CD4-positive, alpha-beta T cell (primary cell): ENCODE measurements at regions of chr13 and their contacts with region 1.

Region 1: DNA sequence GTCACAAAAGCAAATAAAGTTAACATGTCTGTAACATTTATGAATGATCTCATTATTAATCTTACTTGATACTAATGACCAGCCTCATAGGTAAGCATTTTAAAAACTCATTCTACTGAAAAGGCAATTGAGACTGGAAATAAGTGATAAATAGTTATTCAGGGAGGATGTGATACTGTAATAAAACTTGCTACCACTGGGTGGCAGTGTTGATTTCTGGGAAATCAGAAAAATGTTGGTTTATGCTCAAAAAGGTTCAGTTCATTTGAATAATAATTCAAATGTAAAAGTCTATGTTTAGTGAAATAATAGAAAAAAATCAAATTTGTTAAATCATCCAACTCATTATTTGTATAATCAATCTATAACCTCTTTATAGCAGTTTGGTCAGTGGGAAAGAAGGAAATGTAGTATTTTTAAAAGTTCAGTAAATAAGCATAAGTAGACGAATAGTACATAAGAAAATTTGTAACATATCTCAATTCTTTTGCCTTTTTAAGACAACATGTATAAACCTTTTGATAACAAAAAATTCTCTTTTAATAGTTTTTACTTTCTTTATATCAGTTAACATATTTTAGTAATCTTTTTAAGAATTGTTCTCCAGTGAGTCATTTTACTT is 9.6 kb downstream of the ABHD13 start:
- DNase-seq: peak in 7 of 14 experiments; percentile 2 to 75 (median 56)
- ATAC-seq: peak; percentile 54
- H3K4me3 ChIP-seq: no peak overlapping the region
- H3K4me3 Mint-ChIP-seq: no peak overlapping the region
- H3K27ac ChIP-seq: no peak overlapping the region
- H3K27ac Mint-ChIP-seq: no peak overlapping the region
- H3K4me1 ChIP-seq: peaks cover 7% of the 10 kb centered on the region
- H3K4me1 Mint-ChIP-seq: peaks cover 72% of the 10 kb centered on the region
- H3K27me3 ChIP-seq: no peaks in the 10 kb centered on the region
- H3K27me3 Mint-ChIP-seq: no peaks in the 10 kb centered on the region
- CTCF ChIP-seq: peak; percentile 95

Region 2: DNA sequence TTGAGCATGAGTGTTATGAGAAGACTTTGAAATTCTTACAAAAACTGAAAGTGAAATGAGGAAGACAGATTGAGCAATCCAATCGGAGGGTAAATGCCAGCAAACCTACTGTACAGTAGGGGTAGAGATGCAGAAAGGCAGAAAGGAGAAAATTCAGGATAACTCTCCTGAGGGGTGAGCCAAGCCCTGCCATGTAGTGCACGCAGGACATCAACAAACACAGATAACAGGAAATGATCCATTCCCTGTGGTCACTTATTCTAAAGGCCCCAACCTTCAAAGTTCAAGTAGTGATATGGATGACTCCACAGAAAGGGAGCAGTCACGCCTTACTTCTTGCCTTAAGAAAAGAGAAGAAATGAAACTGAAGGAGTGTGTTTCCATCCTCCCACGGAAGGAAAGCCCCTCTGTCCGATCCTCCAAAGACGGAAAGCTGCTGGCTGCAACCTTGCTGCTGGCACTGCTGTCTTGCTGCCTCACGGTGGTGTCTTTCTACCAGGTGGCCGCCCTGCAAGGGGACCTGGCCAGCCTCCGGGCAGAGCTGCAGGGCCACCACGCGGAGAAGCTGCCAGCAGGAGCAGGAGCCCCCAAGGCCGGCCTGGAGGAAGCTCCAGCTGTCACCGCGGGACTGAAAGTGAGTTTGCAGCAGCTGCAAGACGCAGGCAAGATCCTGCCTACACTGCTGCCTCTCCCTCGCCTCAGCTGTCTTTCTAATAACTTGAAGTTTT is 42.0 kb after region 1 on chr13 and contains the start of gene TNFSF13B:
- CTCF ChIA-PET with region 1: interaction called, 3 read pairs
- POLR2A ChIA-PET with region 1: interaction called, 5 read pairs
- intact Hi-C with region 1: loop called (anchors 10 kb)
- DNase-seq: peak in 12 of 14 experiments; percentile 12 to 67 (median 35)
- ATAC-seq: peak; percentile 61
- H3K4me3 ChIP-seq: peak within 1 kb of the TSS; percentile 64
- H3K4me3 Mint-ChIP-seq: peak within 1 kb of the TSS; percentile 87
- H3K27ac ChIP-seq: peak within 1 kb of the TSS; percentile 29 to 71
- H3K27ac Mint-ChIP-seq: peak within 1 kb of the TSS; percentile 87
- H3K4me1 ChIP-seq: peaks cover 12% of the 10 kb centered on the region
- H3K4me1 Mint-ChIP-seq: peaks cover 59% of the 10 kb centered on the region
- H3K27me3 ChIP-seq: no peaks in the 10 kb centered on the region
- H3K27me3 Mint-ChIP-seq: no peaks in the 10 kb centered on the region
- CTCF ChIP-seq: no peak
- total RNA-seq, gene TNFSF13B: 1.6 to 1.8 TPM

Region 3: GRCh38 chr13:108322206-108322824 is 94.6 kb after region 1 on chr13:
- CTCF ChIA-PET with region 1: no interaction called
- POLR2A ChIA-PET with region 1: no interaction called
- intact Hi-C with region 1: loop called (anchors 5 kb)
- DNase-seq: peak in 3 of 14 experiments; percentile 65 to 68 (median 67)
- ATAC-seq: peak; percentile 77
- H3K4me3 ChIP-seq: no peak overlapping the region
- H3K4me3 Mint-ChIP-seq: no peak overlapping the region
- H3K27ac ChIP-seq: no peak overlapping the region
- H3K27ac Mint-ChIP-seq: no peak overlapping the region
- H3K4me1 ChIP-seq: peaks cover 9% of the 10 kb centered on the region
- H3K4me1 Mint-ChIP-seq: peaks cover 17% of the 10 kb centered on the region
- H3K27me3 ChIP-seq: no peaks in the 10 kb centered on the region
- H3K27me3 Mint-ChIP-seq: peaks cover 11% of the 10 kb centered on the region
- CTCF ChIP-seq: peak; percentile 85

Region 4: GRCh38 chr13:108508263-108508662 is 280.5 kb after region 1 on chr13:
- CTCF ChIA-PET with region 1: no interaction called
- POLR2A ChIA-PET with region 1: no interaction called
- intact Hi-C with region 1: loop called in 1 of 2 experiments (anchors 5 kb)
- DNase-seq: peak in 3 of 14 experiments; percentile 49 to 63 (median 52)
- ATAC-seq: no peak
- H3K4me3 ChIP-seq: no peak overlapping the region
- H3K4me3 Mint-ChIP-seq: no peak overlapping the region
- H3K27ac ChIP-seq: no peak overlapping the region
- H3K27ac Mint-ChIP-seq: no peak overlapping the region
- H3K4me1 ChIP-seq: no peaks in the 10 kb centered on the region
- H3K4me1 Mint-ChIP-seq: no peaks in the 10 kb centered on the region
- H3K27me3 ChIP-seq: no peaks in the 10 kb centered on the region
- H3K27me3 Mint-ChIP-seq: no peaks in the 10 kb centered on the region
- CTCF ChIP-seq: peak; percentile 48

Region 5: DNA sequence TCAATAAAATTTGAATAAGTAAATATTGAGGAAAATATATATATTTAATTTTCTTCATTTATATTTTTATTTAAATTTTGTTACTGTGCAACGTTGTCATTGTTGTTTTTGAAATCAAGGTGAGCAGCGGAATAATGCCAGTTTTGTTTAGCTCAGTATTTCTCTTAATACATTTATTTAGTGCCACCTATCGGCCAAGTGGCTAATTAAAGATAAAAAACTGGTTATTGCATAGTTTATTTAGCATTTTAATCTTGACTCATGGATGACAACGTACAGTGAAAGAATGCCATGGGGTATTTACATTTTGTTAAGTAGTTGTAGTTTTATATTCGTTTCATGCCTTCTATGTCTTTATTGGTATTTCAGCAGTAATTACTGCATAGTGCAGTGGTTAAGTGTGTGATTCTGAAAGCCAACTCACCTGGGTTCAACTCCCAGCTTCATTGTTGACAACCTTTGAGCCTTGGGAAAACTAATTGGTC is 667.5 kb after region 1 on chr13:
- CTCF ChIA-PET with region 1: no interaction called
- POLR2A ChIA-PET with region 1: no interaction called
- intact Hi-C with region 1: loop called (anchors 2 to 5 kb)
- DNase-seq: peak in 4 of 14 experiments; percentile 10 to 56 (median 46)
- ATAC-seq: no peak
- H3K4me3 ChIP-seq: no peak overlapping the region
- H3K4me3 Mint-ChIP-seq: no peak overlapping the region
- H3K27ac ChIP-seq: no peak overlapping the region
- H3K27ac Mint-ChIP-seq: no peak overlapping the region
- H3K4me1 ChIP-seq: no peaks in the 10 kb centered on the region
- H3K4me1 Mint-ChIP-seq: peaks cover 9% of the 10 kb centered on the region
- H3K27me3 ChIP-seq: no peaks in the 10 kb centered on the region
- H3K27me3 Mint-ChIP-seq: peaks cover 9% of the 10 kb centered on the region
- CTCF ChIP-seq: peak; percentile 79

Region 6: DNA sequence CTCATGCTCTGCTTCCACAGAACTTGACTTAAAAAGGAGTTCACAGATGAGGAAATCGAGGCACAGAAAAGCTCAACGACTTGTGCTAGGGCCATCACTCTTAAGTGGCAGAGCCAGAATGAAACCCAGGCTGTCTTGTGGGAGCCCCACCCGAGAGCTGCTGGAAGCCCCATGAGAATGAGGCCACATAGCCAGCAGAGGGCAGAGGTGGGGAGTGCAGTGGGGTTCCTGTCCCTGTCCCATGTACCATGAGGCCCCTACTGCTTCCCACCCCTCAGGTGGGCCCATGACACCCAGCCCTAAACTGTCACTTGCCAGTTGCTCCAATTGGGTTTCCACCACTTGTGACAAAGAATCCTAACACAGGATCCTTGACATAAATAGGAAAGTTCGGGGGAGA is 1382.8 kb after region 1 on chr13:
- CTCF ChIA-PET with region 1: no interaction called
- POLR2A ChIA-PET with region 1: no interaction called
- intact Hi-C with region 1: no loop called
- DNase-seq: peak; percentile 1 to 57 (median 28)
- ATAC-seq: peak; percentile 74
- H3K4me3 ChIP-seq: no peak overlapping the region
- H3K4me3 Mint-ChIP-seq: no peak overlapping the region
- H3K27ac ChIP-seq: no peak overlapping the region
- H3K27ac Mint-ChIP-seq: no peak overlapping the region
- H3K4me1 ChIP-seq: no peaks in the 10 kb centered on the region
- H3K4me1 Mint-ChIP-seq: no peaks in the 10 kb centered on the region
- H3K27me3 ChIP-seq: no peaks in the 10 kb centered on the region
- H3K27me3 Mint-ChIP-seq: no peaks in the 10 kb centered on the region
- CTCF ChIP-seq: peak; percentile 45